H1 (cell line): ENCODE measurements at regions of chr11 and their contacts with region 1.

Region 1: DNA sequence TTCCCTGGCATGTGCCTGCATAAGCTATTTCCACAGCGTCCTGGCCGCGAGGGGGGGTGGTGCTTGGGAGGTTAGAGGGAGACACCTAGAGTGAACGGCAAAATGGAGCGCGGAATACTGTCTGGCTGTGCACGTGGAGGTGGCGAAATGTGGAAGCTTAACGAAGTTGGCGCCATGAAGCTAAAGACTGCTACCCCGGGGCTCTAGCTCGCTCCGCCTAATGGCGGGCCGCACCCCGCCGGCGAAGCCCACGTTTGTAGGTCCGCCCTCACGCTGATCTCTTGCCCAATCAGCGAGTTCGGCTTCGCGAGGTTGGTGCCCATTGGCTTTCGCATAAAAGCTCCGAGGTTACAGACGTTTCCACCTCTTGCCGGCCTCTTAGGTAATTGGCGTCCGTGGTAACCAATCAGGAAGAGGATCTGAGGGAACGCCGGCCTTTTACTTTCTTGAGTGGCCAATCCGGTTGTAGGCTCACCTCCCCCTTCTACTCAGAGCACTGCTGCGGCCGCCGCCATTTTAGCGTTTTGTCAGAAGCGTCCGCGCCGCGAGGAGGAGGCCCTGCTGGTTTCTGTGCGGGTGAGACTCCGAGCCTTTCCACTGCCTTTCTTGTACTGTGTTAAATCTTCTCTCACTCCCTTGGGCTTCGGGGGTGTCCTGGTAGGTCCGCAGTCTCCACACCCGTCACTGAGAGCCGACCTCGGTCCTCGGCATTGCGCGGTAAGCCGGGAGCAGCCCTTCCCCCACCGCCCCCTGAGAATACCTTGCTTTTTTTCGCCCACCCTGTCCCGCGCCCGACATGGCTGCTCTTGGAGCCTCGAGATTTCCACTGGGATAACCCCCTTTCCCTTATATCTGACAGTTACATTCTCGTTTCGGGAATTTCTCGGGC is at the start of gene RBM4:
- DNase-seq: peak; percentile 94 to 99
- H3K4me3 ChIP-seq: peak within 1 kb of the TSS; percentile 84 to 98 (median 94)
- H3K27ac ChIP-seq: peak within 1 kb of the TSS; percentile 99
- H3K4me1 ChIP-seq: peaks cover 0 to 20% (median 14%) of the 10 kb centered on the region in 4 experiments; a peak in 5 of 7 replicates
- H3K27me3 ChIP-seq: no peaks in the 10 kb centered on the region
- CTCF ChIP-seq: no peak
- EP300 ChIP-seq: 0 out of 3 replicates have a peak, but pooled peaks of 1 of the 2 experiments have one; percentile 21
- POLR2A ChIP-seq: peak; percentile 95 to 99
- RAD21 ChIP-seq: 0 out of 4 replicates have a peak, but pooled peaks of 1 of the 2 experiments have one; percentile 4
- total RNA-seq, gene RBM4: 192 and 201 TPM in 2 replicates

Region 2: DNA sequence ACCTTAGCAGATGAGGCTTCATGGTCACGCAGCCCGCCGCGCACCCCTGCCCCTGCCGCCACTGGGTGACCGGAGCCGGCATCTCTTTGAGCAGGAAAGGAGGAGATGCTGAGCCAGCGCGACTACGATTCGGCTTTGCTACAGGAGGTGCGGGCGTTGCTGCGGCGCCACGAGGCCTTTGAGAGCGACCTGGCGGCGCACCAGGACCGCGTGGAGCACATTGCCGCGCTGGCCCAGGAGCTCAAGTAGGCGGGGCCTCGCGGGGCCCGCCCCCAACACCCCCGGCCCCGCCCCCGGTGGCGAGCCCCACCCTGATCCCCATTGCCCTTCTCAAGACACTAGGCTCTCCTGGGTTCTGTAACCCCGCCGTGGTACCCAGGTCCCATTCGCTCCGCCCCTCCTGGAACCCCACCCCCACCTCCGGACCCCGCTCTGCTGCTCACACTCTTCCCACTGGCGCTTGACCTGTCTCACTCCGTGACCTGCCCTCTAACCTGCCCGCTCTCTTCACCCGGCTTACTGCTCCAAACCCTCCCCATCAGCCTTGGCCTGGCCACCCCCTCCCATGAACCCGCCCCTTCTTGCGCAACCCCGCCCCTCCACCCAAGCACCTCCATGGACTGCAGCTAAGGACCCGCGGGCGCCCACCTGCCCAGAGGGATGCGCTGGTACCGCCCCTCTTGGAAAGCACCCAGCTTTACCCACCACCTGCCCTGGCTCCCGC is 79.1 kb before region 1 on chr11:
- CTCF ChIA-PET with region 1: no interaction called
- POLR2A ChIA-PET with region 1: interaction called, 11 read pairs
- DNase-seq: no peak
- H3K4me3 ChIP-seq: no peak overlapping the region
- H3K27ac ChIP-seq: no peak overlapping the region
- H3K4me1 ChIP-seq: peaks cover 0 to 2% (median 0%) of the 10 kb centered on the region in 4 experiments; a peak in 1 of 7 replicates
- H3K27me3 ChIP-seq: no peaks in the 10 kb centered on the region
- CTCF ChIP-seq: no peak
- EP300 ChIP-seq: no peak
- POLR2A ChIP-seq: no peak
- RAD21 ChIP-seq: no peak

Region 3: GRCh38 chr11:66568124-66568916 is 70.1 kb before region 1 on chr11 and contains the start of gene CTSF:
- CTCF ChIA-PET with region 1: no interaction called
- POLR2A ChIA-PET with region 1: interaction called, 30 read pairs
- DNase-seq: no peak
- H3K4me3 ChIP-seq: no peak within 1 kb of the TSS; a peak in 1 of 8 replicates
- H3K27ac ChIP-seq: no peak within 1 kb of the TSS; the same call in 1 of the 2 replicates
- H3K4me1 ChIP-seq: peaks cover 11 to 20% (median 14%) of the 10 kb centered on the region in 4 experiments; a peak in 6 of 7 replicates
- H3K27me3 ChIP-seq: no peaks in the 10 kb centered on the region
- CTCF ChIP-seq: no peak
- EP300 ChIP-seq: no peak
- POLR2A ChIP-seq: no peak
- RAD21 ChIP-seq: no peak
- total RNA-seq, gene CTSF: 0.36 and 0.58 TPM in 2 replicates

Region 4: GRCh38 chr11:66579017-66579606 is 59.3 kb before region 1 on chr11:
- CTCF ChIA-PET with region 1: interaction called, 10 read pairs
- POLR2A ChIA-PET with region 1: interaction called, 12 read pairs
- DNase-seq: peak in 1 of 2 experiments; percentile 97
- H3K4me3 ChIP-seq: no peak overlapping the region
- H3K27ac ChIP-seq: no peak overlapping the region
- H3K4me1 ChIP-seq: peaks cover 0 to 6% (median 4%) of the 10 kb centered on the region in 4 experiments; a peak in 5 of 7 replicates
- H3K27me3 ChIP-seq: peaks cover 0 to 6% (median 1%) of the 10 kb centered on the region in 4 experiments; a peak in 2 of 7 replicates
- CTCF ChIP-seq: peak; percentile 81 to 94 (median 90)
- EP300 ChIP-seq: 0 out of 3 replicates have a peak, but pooled peaks of 1 of the 2 experiments have one; percentile 26
- POLR2A ChIP-seq: no peak
- RAD21 ChIP-seq: peak; percentile 75 to 78

Region 5: GRCh38 chr11:66694732-66695207 is 56.3 kb after region 1 on chr11:
- CTCF ChIA-PET with region 1: no interaction called
- POLR2A ChIA-PET with region 1: no interaction called
- DNase-seq: peak; percentile 87 to 95
- H3K4me3 ChIP-seq: no peak overlapping the region
- H3K27ac ChIP-seq: 0 out of 2 replicates have a peak overlapping the region, but pooled peaks have one; percentile 30
- H3K4me1 ChIP-seq: peaks cover 0 to 3% (median 1%) of the 10 kb centered on the region in 4 experiments; a peak in 2 of 7 replicates
- H3K27me3 ChIP-seq: no peaks in the 10 kb centered on the region
- CTCF ChIP-seq: peak; percentile 77 to 100 (median 97)
- EP300 ChIP-seq: no peak
- POLR2A ChIP-seq: no peak
- RAD21 ChIP-seq: peak; percentile 92 to 94